Testis (tissue), 5 donors: ENCODE measurements at regions of chr6 and their contacts with region 1.

Region 1: DNA sequence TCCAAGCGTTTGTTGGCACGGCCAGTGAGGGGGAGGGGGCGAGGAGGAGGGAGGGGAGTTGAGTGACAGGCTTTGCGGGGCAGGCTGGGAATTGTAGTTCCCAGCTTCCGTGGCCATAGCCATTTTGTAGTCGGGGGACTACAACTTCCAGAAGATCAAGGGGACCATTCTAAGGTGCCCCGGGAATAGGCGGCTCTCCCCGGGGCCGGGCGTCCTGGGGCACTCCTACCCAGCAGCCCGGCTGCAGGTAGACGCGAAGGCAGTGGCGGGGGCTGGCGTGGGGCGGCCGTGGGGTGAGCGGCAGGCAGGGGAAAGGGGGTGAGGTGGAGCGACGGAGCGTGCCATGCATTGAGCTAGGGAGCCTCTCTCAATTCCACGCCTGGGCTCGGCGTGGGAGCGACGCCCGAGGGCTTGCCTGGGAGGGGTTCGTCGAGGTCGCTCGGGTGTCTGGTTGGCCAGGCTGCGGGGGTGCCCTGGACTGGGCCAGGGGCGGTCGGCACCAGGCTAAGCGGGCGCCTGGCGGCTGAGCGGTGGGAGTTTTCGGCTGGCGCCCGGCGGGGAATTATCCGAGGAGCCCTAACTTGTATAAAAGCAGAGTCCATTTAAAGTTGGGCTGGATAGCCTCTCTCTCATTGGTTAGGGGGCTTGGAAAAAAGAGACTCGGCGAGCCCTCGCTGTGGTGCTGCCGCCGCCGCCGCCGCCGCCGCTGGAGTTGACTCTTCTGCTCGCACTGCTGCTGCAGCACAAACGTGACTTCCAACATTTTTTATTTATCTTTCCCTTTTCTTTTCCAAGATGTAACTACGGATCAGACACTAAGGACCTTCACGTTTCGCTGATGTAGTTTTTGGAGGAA is at the start of gene JARID2:
- DNase-seq: peak; percentile 99
- H3K4me3 ChIP-seq: peak within 1 kb of the TSS; percentile 82 to 95
- H3K27ac ChIP-seq: peak within 1 kb of the TSS; percentile 93 to 96
- H3K4me1 ChIP-seq: no peaks in the 10 kb centered on the region
- H3K27me3 ChIP-seq: no peaks in the 10 kb centered on the region
- CTCF ChIP-seq: peak in 1 of 3 experiments; percentile 39
- POLR2A ChIP-seq: peak; percentile 59
- total RNA-seq, gene JARID2: 53.7 to 60.8 TPM

Region 2: DNA sequence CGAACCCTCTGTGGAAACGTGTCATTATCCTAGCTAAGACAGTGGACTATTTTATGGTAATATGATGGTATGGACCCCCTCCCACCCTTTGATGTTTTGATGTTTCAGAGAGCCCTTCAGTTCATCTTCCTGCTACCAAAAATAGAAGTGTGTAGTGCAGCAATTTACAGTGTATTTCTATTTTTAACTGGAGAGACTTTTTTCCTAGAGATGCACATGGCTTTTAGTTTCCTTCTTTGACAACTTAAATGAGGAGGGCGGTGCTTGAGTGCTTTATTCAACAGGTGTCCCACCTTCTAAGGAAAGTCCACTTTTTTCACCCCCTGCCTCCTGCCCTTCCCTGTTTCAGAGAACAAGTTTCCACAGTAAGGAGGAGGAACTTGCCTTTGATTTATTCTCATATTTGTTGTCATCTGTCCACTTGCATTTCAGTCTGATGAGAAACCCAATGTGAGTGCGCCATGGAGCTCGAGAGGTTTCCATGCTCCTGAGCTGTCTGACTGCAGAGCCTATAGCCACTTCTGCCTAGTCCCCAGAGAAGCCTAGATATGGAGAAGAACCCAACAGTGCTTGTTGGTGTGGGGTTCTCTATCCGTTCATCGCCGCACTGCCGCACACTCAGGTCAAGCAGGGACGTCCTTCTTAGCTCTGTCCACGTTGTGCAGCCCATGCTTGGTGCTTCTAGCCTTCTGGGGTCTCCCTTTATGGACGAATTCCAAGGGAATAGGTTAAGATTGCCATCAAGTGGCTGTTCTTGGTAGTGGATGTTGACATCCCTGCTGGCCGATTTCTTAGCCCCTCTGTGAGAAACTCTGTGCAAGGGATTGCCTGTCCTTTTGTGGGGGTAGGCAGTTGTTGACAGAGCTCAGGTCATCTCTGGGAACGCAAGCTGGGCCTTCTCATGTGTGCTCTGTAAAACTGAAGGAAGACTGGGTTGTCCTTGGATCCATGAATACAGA is 144.5 kb after region 1 on chr6:
- intact Hi-C with region 1: no loop called
- DNase-seq: no peak
- H3K4me3 ChIP-seq: no peak overlapping the region
- H3K27ac ChIP-seq: no peak overlapping the region
- H3K4me1 ChIP-seq: peaks cover 15% of the 10 kb centered on the region
- H3K27me3 ChIP-seq: no peaks in the 10 kb centered on the region
- CTCF ChIP-seq: peak; percentile 20 to 49 (median 47)
- POLR2A ChIP-seq: no peak

Region 3: GRCh38 chr6:15441215-15441868 is 195.8 kb after region 1 on chr6:
- intact Hi-C with region 1: loop called (anchors 5 kb)
- DNase-seq: peak; percentile 59
- H3K4me3 ChIP-seq: no peak overlapping the region
- H3K27ac ChIP-seq: no peak overlapping the region
- H3K4me1 ChIP-seq: peaks cover 25% of the 10 kb centered on the region
- H3K27me3 ChIP-seq: no peaks in the 10 kb centered on the region
- CTCF ChIP-seq: peak; percentile 31 to 64 (median 61)
- POLR2A ChIP-seq: no peak

Region 4: GRCh38 chr6:15744818-15745402 is 499.3 kb after region 1 on chr6:
- intact Hi-C with region 1: no loop called
- DNase-seq: no peak
- H3K4me3 ChIP-seq: no peak overlapping the region
- H3K27ac ChIP-seq: no peak overlapping the region
- H3K4me1 ChIP-seq: no peaks in the 10 kb centered on the region
- H3K27me3 ChIP-seq: no peaks in the 10 kb centered on the region
- CTCF ChIP-seq: no peak
- POLR2A ChIP-seq: no peak